Transverse colon (tissue), 4 donors: ENCODE measurements at regions of chr13 and their contacts with region 1.

Region 1: DNA sequence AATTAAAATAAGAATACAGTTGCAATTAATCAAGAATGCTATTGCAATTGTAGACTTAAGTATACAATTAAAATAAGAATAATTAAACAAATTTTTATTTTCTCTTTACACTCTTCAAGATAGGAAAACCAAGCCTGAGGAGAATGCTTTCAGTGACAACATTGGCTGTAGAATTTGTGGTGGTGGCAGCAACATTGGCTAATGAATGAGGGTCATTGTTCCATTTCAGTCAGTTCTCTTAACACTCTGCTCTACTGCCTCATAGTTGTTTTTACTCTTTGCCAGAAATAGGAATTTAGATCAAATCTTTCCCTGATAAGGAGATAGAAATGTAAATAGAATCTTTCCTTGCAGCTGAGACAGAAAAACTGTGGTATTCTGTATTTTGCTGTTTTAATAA is 391.6 kb downstream of the PCDH20 start:
- DNase-seq: no peak
- H3K4me3 ChIP-seq: no peak overlapping the region
- H3K27ac ChIP-seq: no peak overlapping the region
- H3K4me1 ChIP-seq: no peaks in the 10 kb centered on the region
- H3K27me3 ChIP-seq: no peaks in the 10 kb centered on the region
- CTCF ChIP-seq: no peak
- EP300 ChIP-seq: no peak
- POLR2A ChIP-seq: no peak

Region 2: DNA sequence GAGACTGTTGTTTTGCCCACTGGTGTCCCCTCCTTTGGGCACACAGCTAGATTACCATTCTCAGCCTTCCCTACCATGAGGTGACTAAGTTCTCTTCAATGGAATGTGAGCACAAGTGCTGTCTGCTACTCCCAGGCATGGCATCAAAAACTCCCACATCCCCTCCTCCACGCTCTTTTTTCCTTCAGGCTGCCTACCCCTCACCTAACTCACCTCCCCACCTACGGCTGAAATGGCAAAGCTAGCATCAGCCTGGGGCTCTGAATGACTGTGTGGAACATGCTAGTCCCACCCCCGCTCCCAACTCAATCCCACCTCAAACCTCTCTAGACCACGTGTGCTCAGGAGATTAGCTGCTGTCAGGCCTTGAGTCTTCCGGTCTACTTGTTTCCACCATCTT is 1372.6 kb before region 1 on chr13:
- in situ Hi-C with region 1: no loop called
- intact Hi-C with region 1: loop called (anchors 5 kb)
- DNase-seq: no peak
- H3K4me3 ChIP-seq: no peak overlapping the region
- H3K27ac ChIP-seq: no peak overlapping the region
- H3K4me1 ChIP-seq: no peaks in the 10 kb centered on the region
- H3K27me3 ChIP-seq: no peaks in the 10 kb centered on the region
- CTCF ChIP-seq: no peak
- EP300 ChIP-seq: no peak
- POLR2A ChIP-seq: no peak

Region 3: DNA sequence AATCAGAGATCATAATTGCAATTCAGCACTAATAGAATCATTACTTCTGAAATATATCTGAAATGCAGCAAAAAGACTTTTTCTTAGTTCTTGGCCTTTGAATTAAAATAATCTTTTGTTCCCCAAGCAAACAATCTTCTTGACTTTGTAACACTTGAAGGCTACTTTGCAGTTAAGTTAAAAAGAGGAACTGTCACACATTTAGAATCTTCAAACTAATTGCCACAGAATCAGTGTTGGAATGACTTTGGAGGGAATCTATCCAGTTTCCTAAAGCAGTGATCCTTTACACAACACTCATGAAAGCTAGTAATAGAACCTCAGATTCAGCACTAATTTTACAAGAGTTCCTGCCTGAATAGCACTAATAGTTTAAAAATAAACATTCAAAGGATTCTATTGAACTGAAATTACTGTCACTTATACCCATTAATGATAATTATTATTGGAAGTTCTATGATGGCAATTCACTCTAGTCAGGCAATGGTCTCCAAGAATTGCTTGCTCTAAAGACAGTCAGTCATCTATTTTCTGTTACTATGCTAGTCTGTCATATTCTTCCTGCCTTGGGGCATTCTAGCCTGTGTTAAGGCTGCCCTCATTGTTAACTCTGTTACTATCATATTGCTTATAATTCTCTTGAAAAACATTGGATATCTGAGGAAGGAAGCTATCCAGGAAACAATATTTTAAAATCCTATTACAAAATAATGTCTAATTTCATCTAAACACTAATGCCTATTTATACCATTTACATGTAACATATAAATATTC is 1222.8 kb before region 1 on chr13:
- in situ Hi-C with region 1: no loop called
- intact Hi-C with region 1: no loop called
- DNase-seq: no peak
- H3K4me3 ChIP-seq: no peak overlapping the region
- H3K27ac ChIP-seq: no peak overlapping the region
- H3K4me1 ChIP-seq: no peaks in the 10 kb centered on the region
- H3K27me3 ChIP-seq: no peaks in the 10 kb centered on the region
- CTCF ChIP-seq: no peak
- EP300 ChIP-seq: no peak
- POLR2A ChIP-seq: no peak

Region 4: DNA sequence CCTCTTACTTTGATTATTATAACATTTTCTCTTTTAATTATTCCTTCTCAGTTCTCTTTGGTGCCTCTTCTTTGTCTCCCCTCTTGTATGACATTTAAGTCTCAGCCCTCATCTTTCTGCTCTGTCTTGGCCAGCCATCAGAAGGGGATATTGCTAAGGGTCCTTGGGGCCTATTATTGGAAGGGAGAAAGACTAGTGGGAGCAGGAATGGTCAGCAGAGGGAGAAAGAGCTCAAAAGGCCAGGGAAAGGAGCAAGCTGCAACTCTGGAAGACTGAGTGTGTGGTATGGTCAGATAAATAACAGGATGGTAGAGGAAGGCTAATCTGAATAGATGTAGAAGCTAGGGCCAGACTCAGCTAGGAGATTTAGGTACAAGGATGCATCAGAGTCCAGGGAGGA is 290.1 kb before region 1 on chr13:
- in situ Hi-C with region 1: no loop called
- intact Hi-C with region 1: no loop called
- DNase-seq: no peak
- H3K4me3 ChIP-seq: no peak overlapping the region
- H3K27ac ChIP-seq: no peak overlapping the region
- H3K4me1 ChIP-seq: no peaks in the 10 kb centered on the region
- H3K27me3 ChIP-seq: no peaks in the 10 kb centered on the region
- CTCF ChIP-seq: no peak
- EP300 ChIP-seq: no peak
- POLR2A ChIP-seq: no peak

Region 5: GRCh38 chr13:61255035-61255796 is 231.2 kb after region 1 on chr13:
- in situ Hi-C with region 1: no loop called
- intact Hi-C with region 1: no loop called
- DNase-seq: no peak
- H3K4me3 ChIP-seq: no peak overlapping the region
- H3K27ac ChIP-seq: no peak overlapping the region
- H3K4me1 ChIP-seq: no peaks in the 10 kb centered on the region
- H3K27me3 ChIP-seq: no peaks in the 10 kb centered on the region
- CTCF ChIP-seq: no peak
- EP300 ChIP-seq: no peak
- POLR2A ChIP-seq: no peak